Endothelial cell of umbilical vein (primary cell): ENCODE measurements at regions of chrX and their contacts with region 1.

Region 1: DNA sequence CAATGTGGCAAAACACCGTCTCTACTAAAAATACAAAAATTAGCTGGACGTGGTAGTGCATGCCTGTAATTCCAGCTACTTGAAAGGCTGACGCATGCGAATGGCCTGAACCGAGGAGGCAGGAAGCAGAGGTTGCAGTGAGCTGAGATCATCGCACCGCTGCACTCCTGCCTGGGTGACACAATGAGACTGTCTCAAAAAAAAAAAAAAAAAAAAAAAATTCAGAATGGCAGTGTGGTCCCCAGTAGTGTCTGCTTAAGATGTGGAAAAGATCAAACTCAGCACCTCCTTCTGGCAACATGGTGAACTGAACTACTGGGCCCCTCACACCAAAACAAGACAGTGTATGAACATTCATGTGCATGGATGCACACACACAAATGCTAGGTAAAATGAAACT is 32.2 kb downstream of the SMS start:
- DNase-seq: peak; percentile 32
- H3K4me3 ChIP-seq: no peak overlapping the region
- H3K27ac ChIP-seq: peak overlapping the region; percentile 41
- H3K4me1 ChIP-seq: peaks cover 7% of the 10 kb centered on the region
- H3K27me3 ChIP-seq: no peaks in the 10 kb centered on the region
- CTCF ChIP-seq: peak in 1 of 2 donors; percentile 17
- POLR2A ChIP-seq: no peak

Region 2: GRCh38 chrX:21374163-21374993 is 598.3 kb before region 1 on chrX and contains the start of gene CNKSR2:
- CTCF ChIA-PET with region 1: no interaction called
- POLR2A ChIA-PET with region 1: no interaction called
- dilution Hi-C with region 1: no loop called
- intact Hi-C with region 1: loop called (anchors 10 kb)
- DNase-seq: peak; percentile 5
- H3K4me3 ChIP-seq: peak within 1 kb of the TSS in 1 of 3 experiments; percentile 34
- H3K27ac ChIP-seq: no peak within 1 kb of the TSS
- H3K4me1 ChIP-seq: peaks cover 3% of the 10 kb centered on the region
- H3K27me3 ChIP-seq: peaks cover 14 to 36% of the 10 kb centered on the region in 2 experiments
- CTCF ChIP-seq: no peak
- POLR2A ChIP-seq: no peak
- total RNA-seq, gene CNKSR2: 0.13 and 0.48 TPM in 2 replicates

Region 3: GRCh38 chrX:21745756-21746155 is 227.0 kb before region 1 on chrX:
- CTCF ChIA-PET with region 1: interaction called, 6 read pairs
- POLR2A ChIA-PET with region 1: no interaction called
- dilution Hi-C with region 1: no loop called
- intact Hi-C with region 1: loop called (anchors 5 kb)
- DNase-seq: peak; percentile 24
- H3K4me3 ChIP-seq: no peak overlapping the region
- H3K27ac ChIP-seq: no peak overlapping the region
- H3K4me1 ChIP-seq: peaks cover 6% of the 10 kb centered on the region
- H3K27me3 ChIP-seq: peaks cover 0 to 9% of the 10 kb centered on the region in 2 experiments
- CTCF ChIP-seq: peak; percentile 31 to 36
- POLR2A ChIP-seq: no peak

Region 4: GRCh38 chrX:21839334-21840192 is 133.2 kb before region 1 on chrX and contains the start of gene MBTPS2:
- CTCF ChIA-PET with region 1: interaction called, 40 read pairs
- POLR2A ChIA-PET with region 1: no interaction called
- dilution Hi-C with region 1: no loop called
- intact Hi-C with region 1: loop called (anchors 1 kb)
- DNase-seq: peak; percentile 90
- H3K4me3 ChIP-seq: peak within 1 kb of the TSS; percentile 44 to 81 (median 62)
- H3K27ac ChIP-seq: peak within 1 kb of the TSS; percentile 86
- H3K4me1 ChIP-seq: no peaks in the 10 kb centered on the region
- H3K27me3 ChIP-seq: no peaks in the 10 kb centered on the region
- CTCF ChIP-seq: peak in 1 of 2 donors; percentile 15
- POLR2A ChIP-seq: peak; percentile 80
- total RNA-seq, gene MBTPS2: 14.5 and 16.4 TPM in 2 replicates

Region 5: GRCh38 chrX:21926527-21927278 is 46.0 kb before region 1 on chrX:
- CTCF ChIA-PET with region 1: interaction called, 10 read pairs
- POLR2A ChIA-PET with region 1: no interaction called
- dilution Hi-C with region 1: no loop called
- intact Hi-C with region 1: loop called (anchors 1 kb)
- DNase-seq: peak; percentile 93
- H3K4me3 ChIP-seq: peak overlapping the region in 2 of 3 experiments; percentile 13 to 45
- H3K27ac ChIP-seq: peak overlapping the region; percentile 94
- H3K4me1 ChIP-seq: peaks cover 25% of the 10 kb centered on the region
- H3K27me3 ChIP-seq: no peaks in the 10 kb centered on the region
- CTCF ChIP-seq: no peak
- POLR2A ChIP-seq: no peak

Region 6: GRCh38 chrX:21940356-21940829 is 32.3 kb before region 1 on chrX and contains the start of gene SMS:
- CTCF ChIA-PET with region 1: interaction called, 6 read pairs
- POLR2A ChIA-PET with region 1: no interaction called
- dilution Hi-C with region 1: no loop called
- intact Hi-C with region 1: loop called (anchors 2 kb)
- DNase-seq: peak; percentile 66
- H3K4me3 ChIP-seq: peak within 1 kb of the TSS; percentile 59 to 71 (median 71)
- H3K27ac ChIP-seq: peak within 1 kb of the TSS; percentile 84
- H3K4me1 ChIP-seq: peaks cover 35% of the 10 kb centered on the region
- H3K27me3 ChIP-seq: no peaks in the 10 kb centered on the region
- CTCF ChIP-seq: no peak
- POLR2A ChIP-seq: peak; percentile 61
- total RNA-seq, gene SMS: 173 and 177 TPM in 2 replicates

Region 7: DNA sequence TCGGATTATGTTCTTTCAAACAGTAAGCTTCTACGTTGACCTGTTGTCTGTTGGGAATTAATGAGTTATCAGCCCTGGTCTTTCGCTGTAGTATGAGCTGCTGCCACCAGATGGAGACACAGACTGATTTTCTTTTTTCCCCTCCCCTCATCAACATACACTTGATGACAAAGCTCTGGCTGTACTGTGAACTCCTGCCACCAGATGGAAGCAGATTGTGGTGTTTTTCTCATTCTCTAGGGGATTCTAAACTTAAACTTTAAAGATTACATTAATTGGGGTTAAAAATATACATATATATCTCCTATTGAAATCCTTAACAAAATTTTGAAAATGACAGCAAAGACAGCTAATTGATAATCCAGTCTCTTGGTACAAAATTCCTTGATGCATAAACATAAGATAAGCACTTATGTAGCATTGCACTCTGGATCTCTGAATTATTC is 12.6 kb after region 1 on chrX:
- CTCF ChIA-PET with region 1: interaction called, 14 read pairs
- POLR2A ChIA-PET with region 1: no interaction called
- dilution Hi-C with region 1: no loop called
- intact Hi-C with region 1: no loop called
- DNase-seq: peak; percentile 83
- H3K4me3 ChIP-seq: no peak overlapping the region
- H3K27ac ChIP-seq: no peak overlapping the region
- H3K4me1 ChIP-seq: no peaks in the 10 kb centered on the region
- H3K27me3 ChIP-seq: no peaks in the 10 kb centered on the region
- CTCF ChIP-seq: peak; percentile 61 to 67
- POLR2A ChIP-seq: no peak